GM12878 (cell line): ENCODE measurements at regions of chr2 and their contacts with region 1.

Region 1: DNA sequence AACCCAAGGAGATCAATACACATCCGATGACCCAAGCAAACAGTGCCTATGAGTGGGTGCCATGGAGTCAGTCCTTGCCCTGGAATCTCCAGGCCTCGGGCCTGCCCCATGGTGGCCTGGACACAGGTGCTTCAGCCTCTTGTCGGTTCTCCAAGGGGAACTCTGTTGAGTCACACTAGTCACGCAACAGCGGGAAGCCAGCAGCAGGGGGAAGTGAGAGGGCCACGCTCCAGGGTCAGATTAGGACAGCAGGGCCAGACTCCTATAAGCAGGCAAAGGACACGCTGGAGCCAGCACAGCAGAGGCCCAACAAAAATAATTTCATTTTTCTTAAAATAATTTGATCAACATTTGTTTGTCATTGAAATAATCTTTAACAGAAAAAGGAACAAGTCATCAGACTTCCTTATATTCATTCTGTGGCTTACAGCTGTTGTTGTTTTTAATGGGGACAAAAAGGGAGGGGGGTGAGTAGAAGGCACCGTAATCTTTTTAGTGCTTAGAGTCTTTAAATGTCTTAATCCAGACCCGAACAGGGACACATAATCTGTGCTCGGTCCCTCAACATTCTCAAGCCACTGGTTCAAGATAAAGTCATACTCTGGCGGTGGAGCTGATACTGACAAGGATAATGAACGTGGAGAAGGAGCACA is 16.4 kb upstream of the ARMC9 start:
- DNase-seq: peak; percentile 52
- ATAC-seq: peak; percentile 75
- H3K4me3 ChIP-seq: peak overlapping the region; percentile 34; the same call in 1 of the 2 replicates
- H3K27ac ChIP-seq: peak overlapping the region; percentile 81
- H3K4me1 ChIP-seq: peaks cover 48% of the 10 kb centered on the region
- H3K27me3 ChIP-seq: no peaks in the 10 kb centered on the region
- CTCF ChIP-seq: no peak
- EP300 ChIP-seq: peak; percentile 23 to 75; a peak in 3 of 4 replicates
- POLR2A ChIP-seq: 0 out of 2 replicates have a peak, but pooled peaks have one; percentile 22
- RAD21 ChIP-seq: no peak

Region 2: DNA sequence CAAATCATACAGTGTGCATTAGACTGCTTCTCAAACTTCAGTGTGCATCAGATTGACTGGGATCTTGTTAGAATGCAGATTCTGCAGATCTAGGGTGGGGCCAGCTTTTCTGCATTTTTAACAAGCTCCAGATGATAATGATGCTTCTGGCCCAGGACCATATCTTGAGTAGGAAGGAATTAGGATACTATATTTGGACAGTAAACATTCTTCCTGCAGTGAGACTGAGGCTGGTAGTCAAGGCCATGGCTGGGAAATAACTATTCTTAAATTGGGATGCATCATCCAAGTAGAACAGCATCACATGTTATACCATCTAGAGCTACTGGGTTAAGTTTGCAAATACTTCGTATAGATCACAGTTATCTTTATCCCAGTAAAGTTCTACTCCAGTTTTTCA is 11.9 kb before region 1 on chr2:
- CTCF ChIA-PET with region 1: interaction called, 10 read pairs
- POLR2A ChIA-PET with region 1: interaction called, 4 read pairs
- RAD21 ChIA-PET with region 1: interaction called, 5 read pairs
- SMC1A ChIA-PET with region 1: interaction called, 17 read pairs
- in situ Hi-C with region 1: no loop called
- intact Hi-C with region 1: no loop called
- DNase-seq: no peak
- ATAC-seq: no peak
- H3K4me3 ChIP-seq: no peak overlapping the region
- H3K27ac ChIP-seq: no peak overlapping the region
- H3K4me1 ChIP-seq: no peaks in the 10 kb centered on the region
- H3K27me3 ChIP-seq: no peaks in the 10 kb centered on the region
- CTCF ChIP-seq: no peak
- EP300 ChIP-seq: no peak
- POLR2A ChIP-seq: no peak
- RAD21 ChIP-seq: no peak

Region 3: GRCh38 chr2:231191896-231192872 is 10.2 kb after region 1 on chr2:
- CTCF ChIA-PET with region 1: interaction called, 11 read pairs
- POLR2A ChIA-PET with region 1: no interaction called
- RAD21 ChIA-PET with region 1: no interaction called
- SMC1A ChIA-PET with region 1: interaction called, 8 read pairs
- in situ Hi-C with region 1: no loop called
- intact Hi-C with region 1: no loop called
- DNase-seq: no peak
- ATAC-seq: peak; percentile 68
- H3K4me3 ChIP-seq: no peak overlapping the region
- H3K27ac ChIP-seq: no peak overlapping the region
- H3K4me1 ChIP-seq: no peaks in the 10 kb centered on the region
- H3K27me3 ChIP-seq: no peaks in the 10 kb centered on the region
- CTCF ChIP-seq: peak; percentile 15 to 24 (median 18); a peak in 2 of 6 replicates
- EP300 ChIP-seq: no peak
- POLR2A ChIP-seq: no peak
- RAD21 ChIP-seq: no peak

Region 4: DNA sequence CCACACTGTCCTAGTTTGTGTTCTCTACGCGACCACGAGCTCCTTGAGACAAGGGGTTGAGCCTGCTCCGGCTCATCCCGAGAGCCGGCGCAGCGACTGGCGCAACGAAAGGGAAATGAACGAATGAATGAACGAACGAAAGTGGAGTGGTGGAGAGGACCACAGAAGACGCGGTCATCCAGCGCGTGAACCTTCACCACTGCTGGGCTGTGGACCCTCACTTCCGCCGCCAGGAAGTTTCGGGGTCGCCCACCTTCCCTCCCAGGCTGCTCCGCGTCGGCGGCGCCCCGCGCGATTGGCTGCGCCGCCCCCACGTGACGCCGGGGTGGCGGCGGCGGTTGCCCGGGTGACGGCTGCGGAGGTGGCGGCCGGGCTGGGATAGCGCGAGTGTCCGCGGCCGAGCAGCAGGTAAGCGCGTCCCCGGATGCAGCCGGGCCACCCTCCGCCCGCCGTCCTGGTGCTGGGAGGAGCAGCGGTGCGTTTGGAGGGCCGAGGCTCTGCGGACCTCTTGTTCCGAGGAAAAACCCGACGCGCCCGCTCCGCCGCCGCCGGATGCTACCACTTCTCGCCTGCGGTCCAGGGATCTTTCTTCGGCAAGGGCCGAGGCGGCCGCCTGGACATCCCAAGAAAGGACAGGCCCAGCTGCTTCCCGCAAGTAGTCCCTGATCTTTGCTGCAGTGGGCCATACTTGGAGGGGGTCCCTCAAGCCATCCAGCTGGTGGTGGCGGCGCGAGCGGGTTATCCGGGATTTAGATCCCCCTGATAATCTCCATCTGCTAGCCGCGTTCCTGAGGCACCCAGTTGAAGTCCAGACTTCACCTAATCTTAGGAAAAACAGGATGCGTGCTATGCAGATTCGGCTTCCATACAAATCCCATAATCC is 16.5 kb after region 1 on chr2 and contains the start of gene ARMC9:
- CTCF ChIA-PET with region 1: interaction called, 5 read pairs
- POLR2A ChIA-PET with region 1: no interaction called
- RAD21 ChIA-PET with region 1: interaction called, 12 read pairs
- SMC1A ChIA-PET with region 1: interaction called, 10 read pairs
- in situ Hi-C with region 1: no loop called
- intact Hi-C with region 1: no loop called
- DNase-seq: peak; percentile 38
- ATAC-seq: peak; percentile 99
- H3K4me3 ChIP-seq: peak within 1 kb of the TSS; percentile 97
- H3K27ac ChIP-seq: peak within 1 kb of the TSS; percentile 78
- H3K4me1 ChIP-seq: peaks cover 6% of the 10 kb centered on the region
- H3K27me3 ChIP-seq: no peaks in the 10 kb centered on the region
- CTCF ChIP-seq: no peak
- EP300 ChIP-seq: no peak
- POLR2A ChIP-seq: peak; percentile 92
- RAD21 ChIP-seq: 0 out of 2 replicates have a peak, but pooled peaks have one; percentile 6
- polyA plus RNA-seq, gene ARMC9: 3.8 to 6.5 TPM